GM23248 (cell line): ENCODE measurements at regions of chr1 and their contacts with region 1.

Region 1: GRCh38 chr1:201358596-201358995 is 18.9 kb downstream of the TNNT2 start:
- DNase-seq: peak; percentile 42
- H3K4me3 ChIP-seq: no peak overlapping the region
- H3K27ac ChIP-seq: no peak overlapping the region
- H3K4me1 ChIP-seq: no peaks in the 10 kb centered on the region
- H3K27me3 ChIP-seq: peaks cover under 1% of the 10 kb centered on the region

Region 2: GRCh38 chr1:201245092-201245491 is 113.5 kb before region 1 on chr1:
- in situ Hi-C with region 1: loop called (anchors 10 kb)
- DNase-seq: no peak
- H3K4me3 ChIP-seq: no peak overlapping the region
- H3K27ac ChIP-seq: no peak overlapping the region
- H3K4me1 ChIP-seq: no peaks in the 10 kb centered on the region
- H3K27me3 ChIP-seq: peaks cover 68% of the 10 kb centered on the region

Region 3: GRCh38 chr1:201709564-201710295 is 351.1 kb after region 1 on chr1:
- in situ Hi-C with region 1: no loop called
- DNase-seq: peak; percentile 85
- H3K4me3 ChIP-seq: no peak overlapping the region
- H3K27ac ChIP-seq: peak overlapping the region; percentile 99
- H3K4me1 ChIP-seq: peaks cover 76% of the 10 kb centered on the region
- H3K27me3 ChIP-seq: no peaks in the 10 kb centered on the region